Transverse colon (tissue), 4 donors: ENCODE measurements at regions of chr10 and their contacts with region 1.

Region 1: DNA sequence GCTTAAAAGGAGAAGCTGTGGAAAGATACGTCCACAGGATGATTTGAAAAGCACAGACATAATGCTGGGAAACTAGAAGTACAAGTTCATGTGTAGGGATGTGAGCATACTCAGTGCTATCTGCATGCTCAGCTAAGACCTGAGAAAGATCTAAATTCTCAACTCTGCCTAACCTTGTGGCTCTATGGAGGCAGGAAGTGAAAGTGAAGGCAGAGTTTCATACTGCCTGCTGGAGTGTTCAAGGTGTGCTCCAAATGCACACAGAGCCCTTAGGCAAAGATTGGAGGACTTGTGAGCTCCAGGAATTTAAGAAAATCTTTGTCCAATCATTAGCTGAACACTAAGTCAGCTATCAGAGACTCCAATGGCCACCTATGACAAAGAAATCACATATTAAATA is 190.9 kb downstream of the RNLS start:
- DNase-seq: no peak
- H3K4me3 ChIP-seq: no peak overlapping the region
- H3K27ac ChIP-seq: no peak overlapping the region
- H3K4me1 ChIP-seq: peaks cover 0 to 29% (median 9%) of the 10 kb centered on the region in 4 donors
- H3K27me3 ChIP-seq: no peaks in the 10 kb centered on the region
- CTCF ChIP-seq: no peak
- EP300 ChIP-seq: no peak
- POLR2A ChIP-seq: no peak

Region 2: GRCh38 chr10:88553116-88553752 is 161.0 kb after region 1 on chr10:
- in situ Hi-C with region 1: loop called in 1 of 4 experiments (anchors 10 kb)
- intact Hi-C with region 1: no loop called
- DNase-seq: peak; percentile 41
- H3K4me3 ChIP-seq: no peak overlapping the region
- H3K27ac ChIP-seq: no peak overlapping the region
- H3K4me1 ChIP-seq: peaks cover 0 to 3% (median 0%) of the 10 kb centered on the region in 4 donors
- H3K27me3 ChIP-seq: no peaks in the 10 kb centered on the region
- CTCF ChIP-seq: peak; percentile 63 to 79 (median 75)
- EP300 ChIP-seq: no peak
- POLR2A ChIP-seq: no peak

Region 3: GRCh38 chr10:88616251-88616977 is 224.2 kb after region 1 on chr10:
- in situ Hi-C with region 1: no loop called
- intact Hi-C with region 1: no loop called
- DNase-seq: no peak
- H3K4me3 ChIP-seq: no peak overlapping the region
- H3K27ac ChIP-seq: no peak overlapping the region
- H3K4me1 ChIP-seq: no peaks in the 10 kb centered on the region
- H3K27me3 ChIP-seq: no peaks in the 10 kb centered on the region
- CTCF ChIP-seq: no peak
- EP300 ChIP-seq: no peak
- POLR2A ChIP-seq: no peak